Activated CD4-positive, alpha-beta T cell treated with anti-CD3 and anti-CD28 coated beads for 36 hours (primary cell): ENCODE measurements at regions of chr10 and their contacts with region 1.

Region 1: GRCh38 chr10:14822879-14823755 is 14.7 kb downstream of the CDNF start:
- DNase-seq: peak; percentile 64
- ATAC-seq: peak; percentile 64
- H3K4me3 Mint-ChIP-seq: no peak overlapping the region
- H3K27ac Mint-ChIP-seq: peak overlapping the region; percentile 65
- H3K4me1 Mint-ChIP-seq: peaks cover 6% of the 10 kb centered on the region
- H3K27me3 Mint-ChIP-seq: no peaks in the 10 kb centered on the region

Region 2: DNA sequence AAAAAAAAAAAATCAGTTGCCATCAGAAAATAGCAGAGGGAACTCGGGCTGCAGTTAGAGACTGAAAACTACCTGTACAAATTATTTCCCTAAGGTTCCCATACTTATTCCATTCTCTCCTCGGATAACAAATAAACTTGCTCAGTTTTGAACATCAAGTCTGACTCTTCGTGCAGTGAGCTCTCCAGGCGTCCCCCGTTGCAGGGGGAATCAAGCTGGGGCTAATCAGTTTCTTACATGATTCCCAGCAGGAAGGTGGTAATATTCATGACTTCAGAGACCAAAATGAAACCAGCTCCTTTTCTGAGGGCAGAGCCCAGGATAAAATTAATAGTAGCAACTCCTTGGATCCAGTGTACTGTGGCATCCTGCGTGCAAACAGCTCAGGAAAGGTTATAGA is 627.7 kb before region 1 on chr10:
- CTCF ChIA-PET with region 1: no interaction called
- POLR2A ChIA-PET with region 1: no interaction called
- intact Hi-C with region 1: loop called in 1 of 2 experiments (anchors 5 kb)
- DNase-seq: no peak
- ATAC-seq: no peak
- H3K4me3 Mint-ChIP-seq: no peak overlapping the region
- H3K27ac Mint-ChIP-seq: no peak overlapping the region
- H3K4me1 Mint-ChIP-seq: no peaks in the 10 kb centered on the region
- H3K27me3 Mint-ChIP-seq: peaks cover 14% of the 10 kb centered on the region

Region 3: GRCh38 chr10:14499601-14499904 is 323.6 kb before region 1 on chr10:
- CTCF ChIA-PET with region 1: interaction called, 4 read pairs
- POLR2A ChIA-PET with region 1: no interaction called
- intact Hi-C with region 1: loop called (anchors 1 kb)
- DNase-seq: no peak
- ATAC-seq: no peak
- H3K4me3 Mint-ChIP-seq: no peak overlapping the region
- H3K27ac Mint-ChIP-seq: no peak overlapping the region
- H3K4me1 Mint-ChIP-seq: peaks cover 14% of the 10 kb centered on the region
- H3K27me3 Mint-ChIP-seq: no peaks in the 10 kb centered on the region

Region 4: DNA sequence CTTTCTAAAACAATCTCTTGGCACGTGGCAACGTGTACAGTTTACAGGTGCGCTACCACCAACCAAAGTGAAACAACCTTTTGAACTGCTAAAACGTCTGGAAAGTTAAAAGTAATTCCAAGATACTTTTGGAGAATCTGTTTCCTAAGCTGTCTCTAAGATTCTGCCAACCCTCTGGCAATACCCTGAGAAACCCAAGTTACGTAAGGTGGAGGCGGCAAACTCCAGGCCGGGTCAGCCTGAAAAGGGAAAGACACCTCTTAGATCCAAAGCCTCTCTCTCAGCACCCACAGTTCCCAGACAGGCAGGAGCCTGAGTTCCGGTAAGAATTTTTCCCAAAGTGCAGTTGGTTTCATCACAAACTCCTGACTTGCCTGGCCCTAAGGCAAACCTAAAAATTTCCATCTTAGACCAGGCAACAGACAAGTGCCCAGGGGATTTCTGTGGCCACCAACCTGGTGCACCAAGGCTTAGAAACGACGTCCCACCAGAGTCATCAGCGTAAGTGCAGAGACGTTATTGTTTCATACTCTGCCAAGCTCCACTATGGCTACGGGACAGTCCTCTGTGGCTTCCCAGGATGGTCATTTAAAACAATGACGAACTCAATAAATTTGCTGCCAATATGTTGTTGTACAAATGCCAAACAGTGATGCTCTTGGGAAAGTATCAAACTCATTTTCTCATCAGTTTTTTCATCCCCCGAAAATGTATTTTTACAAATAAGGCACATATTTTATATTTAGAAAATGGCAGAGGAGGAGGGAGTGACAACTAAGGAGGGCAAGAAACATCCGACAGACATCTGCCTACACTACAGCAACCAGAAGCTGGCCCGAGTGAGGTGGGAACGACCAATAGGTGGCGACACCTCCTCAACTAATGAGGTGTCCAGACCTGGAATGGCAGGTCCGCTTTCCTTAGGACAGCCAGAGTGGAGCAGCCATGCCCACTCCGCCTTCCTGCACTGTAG is 286.6 kb before region 1 on chr10:
- CTCF ChIA-PET with region 1: interaction called, 16 read pairs
- POLR2A ChIA-PET with region 1: no interaction called
- intact Hi-C with region 1: loop called in 1 of 2 experiments (anchors 2 kb)
- DNase-seq: peak; percentile 74
- ATAC-seq: peak; percentile 37
- H3K4me3 Mint-ChIP-seq: no peak overlapping the region
- H3K27ac Mint-ChIP-seq: no peak overlapping the region
- H3K4me1 Mint-ChIP-seq: peaks cover 79% of the 10 kb centered on the region
- H3K27me3 Mint-ChIP-seq: no peaks in the 10 kb centered on the region

Region 5: GRCh38 chr10:14543046-14543903 is 279.8 kb before region 1 on chr10:
- CTCF ChIA-PET with region 1: interaction called, 16 read pairs
- POLR2A ChIA-PET with region 1: no interaction called
- intact Hi-C with region 1: no loop called
- DNase-seq: peak; percentile 60
- ATAC-seq: peak; percentile 81
- H3K4me3 Mint-ChIP-seq: peak overlapping the region; percentile 62
- H3K27ac Mint-ChIP-seq: peak overlapping the region; percentile 90
- H3K4me1 Mint-ChIP-seq: peaks cover 79% of the 10 kb centered on the region
- H3K27me3 Mint-ChIP-seq: no peaks in the 10 kb centered on the region

Region 6: GRCh38 chr10:14665304-14665703 is 157.8 kb before region 1 on chr10:
- CTCF ChIA-PET with region 1: no interaction called
- POLR2A ChIA-PET with region 1: no interaction called
- intact Hi-C with region 1: loop called in 1 of 2 experiments (anchors 5 kb)
- DNase-seq: peak; percentile 43
- ATAC-seq: peak; percentile 81
- H3K4me3 Mint-ChIP-seq: no peak overlapping the region
- H3K27ac Mint-ChIP-seq: peak overlapping the region; percentile 59
- H3K4me1 Mint-ChIP-seq: peaks cover 60% of the 10 kb centered on the region
- H3K27me3 Mint-ChIP-seq: no peaks in the 10 kb centered on the region

Region 7: GRCh38 chr10:15072358-15072757 is 249.2 kb after region 1 on chr10:
- CTCF ChIA-PET with region 1: no interaction called
- POLR2A ChIA-PET with region 1: no interaction called
- intact Hi-C with region 1: no loop called
- DNase-seq: no peak
- ATAC-seq: no peak
- H3K4me3 Mint-ChIP-seq: no peak overlapping the region
- H3K27ac Mint-ChIP-seq: no peak overlapping the region
- H3K4me1 Mint-ChIP-seq: no peaks in the 10 kb centered on the region
- H3K27me3 Mint-ChIP-seq: no peaks in the 10 kb centered on the region